A549 (cell line): ENCODE measurements at regions of chr14 and their contacts with region 1.

Region 1: DNA sequence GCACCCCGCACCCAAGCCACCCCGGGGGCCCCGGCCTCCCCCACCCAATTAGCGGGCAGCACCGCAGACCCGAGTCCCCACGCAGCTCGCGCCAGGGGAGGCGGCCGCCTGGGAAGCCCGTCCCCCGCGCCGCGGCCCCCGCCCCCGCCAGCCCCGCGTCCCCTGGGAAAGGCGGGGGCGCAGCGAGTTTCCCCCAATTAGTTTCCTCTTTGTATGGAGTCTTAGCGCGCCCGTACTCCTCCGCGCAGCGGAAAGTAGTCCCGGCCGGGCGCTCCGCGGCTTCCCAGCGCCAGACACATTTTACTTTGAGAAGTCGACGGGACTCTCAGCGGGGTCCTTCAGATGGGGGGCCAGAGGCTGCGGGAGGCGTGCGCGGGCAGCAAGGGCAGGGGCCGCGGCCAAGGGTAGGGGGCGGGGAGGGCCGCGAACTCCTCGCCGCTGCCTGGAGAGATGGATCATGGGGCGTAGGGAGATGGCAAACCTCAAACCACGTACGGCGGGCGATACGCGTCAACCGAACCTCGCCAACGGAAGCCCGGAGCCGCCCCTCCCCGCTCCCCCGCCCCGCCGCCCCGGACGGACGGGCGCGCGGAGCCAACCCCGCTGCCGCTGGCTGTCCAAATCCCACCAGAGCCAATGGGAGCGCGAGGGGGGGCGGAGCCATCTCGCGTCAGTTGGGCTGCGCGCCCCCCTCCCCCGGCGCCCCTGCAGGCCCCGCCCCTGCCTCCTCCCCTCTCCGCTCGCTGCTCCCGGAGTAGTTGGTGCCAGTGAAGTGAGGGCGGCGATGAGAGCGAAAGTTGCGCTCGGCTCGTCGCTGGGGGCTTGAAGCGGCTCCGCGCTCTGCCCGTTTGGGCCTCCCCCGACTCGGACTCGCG is at the start of gene RCOR1:
- DNase-seq: peak; percentile 95 to 97
- ATAC-seq: peak; percentile 74 to 88
- H3K4me3 ChIP-seq: peak within 1 kb of the TSS; percentile 85
- H3K27ac ChIP-seq: peak within 1 kb of the TSS; percentile 96 to 98
- H3K4me1 ChIP-seq: peaks cover 36% of the 10 kb centered on the region
- CTCF ChIP-seq: no peak
- EP300 ChIP-seq: peak in 1 of 2 experiments; percentile 45; a peak in 1 of 5 replicates
- POLR2A ChIP-seq: peak; percentile 95
- RAD21 ChIP-seq: no peak
- polyA plus RNA-seq, gene RCOR1: 24.7 and 25.5 TPM in 2 replicates

Region 2: GRCh38 chr14:102524466-102525218 is 67.5 kb before region 1 on chr14:
- CTCF ChIA-PET with region 1: interaction called, 39 read pairs
- POLR2A ChIA-PET with region 1: interaction called, 23 read pairs
- DNase-seq: peak; percentile 99
- ATAC-seq: peak; percentile 94 to 97
- H3K4me3 ChIP-seq: peak overlapping the region; percentile 51
- H3K27ac ChIP-seq: peak overlapping the region; percentile 85 to 88
- H3K4me1 ChIP-seq: peaks cover 32% of the 10 kb centered on the region
- CTCF ChIP-seq: peak; percentile 96
- EP300 ChIP-seq: no peak
- POLR2A ChIP-seq: peak; percentile 94
- RAD21 ChIP-seq: peak; percentile 85 to 89

Region 3: GRCh38 chr14:102602379-102603292 is 10.5 kb after region 1 on chr14:
- CTCF ChIA-PET with region 1: interaction called, 14 read pairs
- POLR2A ChIA-PET with region 1: no interaction called
- DNase-seq: no peak
- ATAC-seq: no peak
- H3K4me3 ChIP-seq: no peak overlapping the region
- H3K27ac ChIP-seq: 0 out of 6 replicates have a peak overlapping the region, but pooled peaks of 1 of the 2 experiments have one; percentile 4
- H3K4me1 ChIP-seq: peaks cover 27% of the 10 kb centered on the region
- CTCF ChIP-seq: no peak
- EP300 ChIP-seq: no peak
- POLR2A ChIP-seq: no peak
- RAD21 ChIP-seq: no peak

Region 4: DNA sequence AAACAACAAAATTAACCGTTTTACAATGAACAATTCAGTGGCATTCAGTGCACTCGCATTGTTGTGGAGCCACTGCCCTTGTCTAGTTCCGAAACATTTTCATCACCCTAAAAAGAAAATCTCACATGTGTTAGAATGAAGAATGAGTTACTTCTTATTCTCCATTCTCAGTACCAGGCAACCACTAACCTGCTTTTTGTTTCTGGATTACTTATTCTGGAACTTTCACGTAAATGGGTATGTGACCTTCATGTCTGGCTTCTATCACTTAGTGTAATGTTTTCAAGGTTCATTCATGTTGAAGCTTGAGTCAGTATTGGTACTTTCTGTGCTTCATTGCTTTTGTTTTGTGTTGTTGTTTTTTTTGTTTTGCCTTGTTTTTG is 15.9 kb after region 1 on chr14:
- CTCF ChIA-PET with region 1: interaction called, 34 read pairs
- POLR2A ChIA-PET with region 1: no interaction called
- DNase-seq: no peak
- ATAC-seq: no peak
- H3K4me3 ChIP-seq: no peak overlapping the region
- H3K27ac ChIP-seq: no peak overlapping the region
- H3K4me1 ChIP-seq: peaks cover 14% of the 10 kb centered on the region; the same call in 2 of the 3 replicates
- CTCF ChIP-seq: no peak
- EP300 ChIP-seq: no peak
- POLR2A ChIP-seq: no peak
- RAD21 ChIP-seq: no peak

Region 5: DNA sequence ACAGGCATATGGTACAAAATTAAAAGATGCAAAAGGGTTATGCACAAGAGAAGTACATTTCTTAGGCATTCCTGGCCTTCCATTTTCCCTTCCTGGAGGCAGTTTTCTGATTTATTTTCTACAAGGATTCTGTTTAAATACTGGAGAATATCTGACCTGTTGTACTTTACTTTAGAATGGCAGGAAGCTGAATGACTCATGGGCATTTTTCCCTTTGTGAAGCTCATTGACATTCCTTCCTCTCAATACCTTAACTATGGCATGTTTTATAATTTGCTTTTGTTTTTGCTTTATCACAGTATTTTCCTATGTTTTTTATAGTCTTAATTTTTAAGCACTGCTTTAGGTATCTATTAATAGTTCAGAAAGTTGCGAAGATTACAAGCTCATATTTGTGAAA is 63.0 kb after region 1 on chr14:
- CTCF ChIA-PET with region 1: interaction called, 20 read pairs
- POLR2A ChIA-PET with region 1: interaction called, 3 read pairs
- DNase-seq: peak; percentile 30 to 51
- ATAC-seq: peak in 1 of 2 experiments; percentile 72; a peak in 3 of 6 replicates
- H3K4me3 ChIP-seq: no peak overlapping the region
- H3K27ac ChIP-seq: peak overlapping the region; percentile 52 to 75; a peak in 5 of 6 replicates
- H3K4me1 ChIP-seq: peaks cover 51% of the 10 kb centered on the region
- CTCF ChIP-seq: no peak
- EP300 ChIP-seq: no peak
- POLR2A ChIP-seq: no peak
- RAD21 ChIP-seq: no peak

Region 6: GRCh38 chr14:102731871-102732800 is 140.0 kb after region 1 on chr14:
- CTCF ChIA-PET with region 1: no interaction called
- POLR2A ChIA-PET with region 1: no interaction called
- DNase-seq: no peak
- ATAC-seq: peak in 1 of 2 experiments; percentile 33; a peak in 4 of 6 replicates
- H3K4me3 ChIP-seq: no peak overlapping the region
- H3K27ac ChIP-seq: no peak overlapping the region
- H3K4me1 ChIP-seq: no peaks in the 10 kb centered on the region
- CTCF ChIP-seq: no peak
- EP300 ChIP-seq: no peak
- POLR2A ChIP-seq: no peak
- RAD21 ChIP-seq: no peak